PC-9 (cell line): ENCODE measurements at regions of chr3 and their contacts with region 1.

Region 1: DNA sequence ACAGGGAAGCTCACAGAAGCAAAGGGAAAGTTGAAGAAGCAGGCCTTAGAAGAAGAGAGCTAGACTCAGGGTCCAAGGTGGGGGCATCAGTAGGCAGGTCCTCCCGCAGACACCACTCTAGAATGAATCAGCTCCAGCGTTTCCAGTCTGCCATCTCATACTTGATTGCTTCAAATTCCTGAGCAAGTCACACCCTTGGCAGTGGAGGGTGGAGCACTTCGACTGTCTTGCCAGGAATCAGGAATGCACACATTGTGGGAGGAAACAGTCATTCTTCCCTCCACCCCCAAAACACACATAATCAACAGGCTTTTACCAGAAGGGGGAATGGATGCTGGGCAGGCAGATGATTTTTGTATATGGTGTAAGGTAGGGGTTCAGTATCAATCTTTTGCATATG is 78.5 kb downstream of the CHCHD6 start:
- DNase-seq: peak; percentile 86 to 90
- H3K4me3 ChIP-seq: no peak overlapping the region
- H3K27ac ChIP-seq: peak overlapping the region; percentile 88
- H3K4me1 ChIP-seq: peaks cover 27% of the 10 kb centered on the region
- H3K27me3 ChIP-seq: no peaks in the 10 kb centered on the region
- CTCF ChIP-seq: no peak

Region 2: DNA sequence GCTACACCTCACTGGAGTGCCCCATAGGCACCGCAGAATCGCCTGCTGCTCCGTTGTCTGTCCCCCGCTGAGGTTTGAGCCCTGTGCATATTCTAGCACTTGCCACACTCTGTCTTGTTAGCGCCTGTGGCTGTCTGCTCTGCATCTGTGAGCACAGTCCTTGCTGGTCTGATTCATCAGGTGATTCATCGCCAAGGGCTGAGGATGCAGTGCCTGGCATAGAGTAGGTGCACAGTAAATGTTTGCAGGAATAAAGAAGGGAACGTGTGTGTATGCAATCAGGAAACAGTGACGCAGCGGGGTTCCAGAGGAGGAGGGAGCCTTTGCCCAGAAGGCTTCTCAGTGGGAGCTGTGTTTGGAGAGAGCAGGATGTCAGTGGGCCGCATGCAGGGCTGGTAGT is 76.3 kb after region 1 on chr3:
- CTCF ChIA-PET with region 1: no interaction called
- POLR2A ChIA-PET with region 1: no interaction called
- intact Hi-C with region 1: loop called (anchors 5 kb)
- DNase-seq: peak; percentile 69 to 94
- H3K4me3 ChIP-seq: no peak overlapping the region
- H3K27ac ChIP-seq: peak overlapping the region; percentile 66
- H3K4me1 ChIP-seq: peaks cover 30% of the 10 kb centered on the region
- H3K27me3 ChIP-seq: no peaks in the 10 kb centered on the region
- CTCF ChIP-seq: no peak

Region 3: DNA sequence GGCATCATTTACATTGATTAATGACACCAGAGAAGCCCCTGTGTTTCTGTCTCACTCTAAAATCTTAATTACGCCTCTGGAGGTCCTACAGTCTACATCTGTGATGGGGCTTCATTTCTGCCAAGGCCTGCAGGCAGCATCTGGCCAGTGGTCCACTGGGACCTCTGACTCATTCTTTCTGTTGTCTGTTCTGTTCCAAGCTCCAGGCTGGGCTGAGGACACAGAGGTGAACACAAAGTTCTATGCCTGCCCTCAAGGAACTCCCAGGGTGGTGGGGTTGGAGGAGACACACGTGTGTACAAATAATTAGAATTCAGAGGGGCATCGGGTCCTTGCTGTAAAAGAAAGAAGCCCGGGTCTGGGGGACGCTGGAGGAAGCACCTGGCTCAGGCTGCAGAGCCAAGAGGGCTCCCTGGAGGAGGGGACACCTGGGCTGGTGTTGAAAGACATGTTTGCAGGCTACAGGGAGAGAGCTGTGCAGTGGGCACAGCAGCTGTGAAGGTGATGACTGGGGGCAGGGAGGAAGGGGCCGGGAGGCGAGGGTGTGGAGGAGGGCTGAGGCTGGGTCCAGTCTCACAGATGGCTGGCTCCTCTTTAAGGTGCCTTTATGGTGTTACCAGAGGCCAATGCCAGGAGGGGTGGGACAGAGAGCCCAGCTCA is 307.1 kb after region 1 on chr3:
- CTCF ChIA-PET with region 1: no interaction called
- POLR2A ChIA-PET with region 1: no interaction called
- intact Hi-C with region 1: no loop called
- DNase-seq: no peak
- H3K4me3 ChIP-seq: no peak overlapping the region
- H3K27ac ChIP-seq: no peak overlapping the region
- H3K4me1 ChIP-seq: peaks cover 4% of the 10 kb centered on the region; the same call in 1 of the 2 replicates
- H3K27me3 ChIP-seq: 0 out of 2 replicates have a peak, but pooled peaks cover 5% of the 10 kb centered on the region
- CTCF ChIP-seq: no peak